ENCODE measurements at regions of chr18 and their contacts with region 1.

Region 1: GRCh38 chr18:29560270-29560669 is 1383.3 kb upstream of the CDH2 start:
- DNase-seq: no peak
- ATAC-seq: no peak
- H3K4me3 ChIP-seq: no peak overlapping the region
- H3K27ac ChIP-seq: no peak overlapping the region
- H3K4me1 ChIP-seq: no peaks in the 10 kb centered on the region
- H3K27me3 ChIP-seq: no peaks in the 10 kb centered on the region
- CTCF ChIP-seq: no peak
- EP300 ChIP-seq: no peak
- POLR2A ChIP-seq: no peak
- RAD21 ChIP-seq: no peak

Region 2: GRCh38 chr18:29083545-29083944 is 476.7 kb before region 1 on chr18:
- CTCF ChIA-PET with region 1: no interaction called
- POLR2A ChIA-PET with region 1: no interaction called
- in situ Hi-C with region 1: no loop called
- intact Hi-C with region 1: loop called (anchors 5 kb)
- DNase-seq: no peak
- ATAC-seq: no peak
- H3K4me3 ChIP-seq: no peak overlapping the region
- H3K27ac ChIP-seq: no peak overlapping the region
- H3K4me1 ChIP-seq: no peaks in the 10 kb centered on the region
- H3K27me3 ChIP-seq: no peaks in the 10 kb centered on the region
- CTCF ChIP-seq: no peak
- EP300 ChIP-seq: no peak
- POLR2A ChIP-seq: no peak
- RAD21 ChIP-seq: no peak

Region 3: GRCh38 chr18:29681578-29681977 is 121.3 kb after region 1 on chr18:
- CTCF ChIA-PET with region 1: no interaction called
- POLR2A ChIA-PET with region 1: no interaction called
- in situ Hi-C with region 1: no loop called
- intact Hi-C with region 1: no loop called
- DNase-seq: no peak
- ATAC-seq: no peak
- H3K4me3 ChIP-seq: no peak overlapping the region
- H3K27ac ChIP-seq: no peak overlapping the region
- H3K4me1 ChIP-seq: no peaks in the 10 kb centered on the region
- H3K27me3 ChIP-seq: no peaks in the 10 kb centered on the region
- CTCF ChIP-seq: no peak
- EP300 ChIP-seq: no peak
- POLR2A ChIP-seq: no peak
- RAD21 ChIP-seq: no peak